ENCODE measurements at regions of chr12 and their contacts with region 1.

Region 1: DNA sequence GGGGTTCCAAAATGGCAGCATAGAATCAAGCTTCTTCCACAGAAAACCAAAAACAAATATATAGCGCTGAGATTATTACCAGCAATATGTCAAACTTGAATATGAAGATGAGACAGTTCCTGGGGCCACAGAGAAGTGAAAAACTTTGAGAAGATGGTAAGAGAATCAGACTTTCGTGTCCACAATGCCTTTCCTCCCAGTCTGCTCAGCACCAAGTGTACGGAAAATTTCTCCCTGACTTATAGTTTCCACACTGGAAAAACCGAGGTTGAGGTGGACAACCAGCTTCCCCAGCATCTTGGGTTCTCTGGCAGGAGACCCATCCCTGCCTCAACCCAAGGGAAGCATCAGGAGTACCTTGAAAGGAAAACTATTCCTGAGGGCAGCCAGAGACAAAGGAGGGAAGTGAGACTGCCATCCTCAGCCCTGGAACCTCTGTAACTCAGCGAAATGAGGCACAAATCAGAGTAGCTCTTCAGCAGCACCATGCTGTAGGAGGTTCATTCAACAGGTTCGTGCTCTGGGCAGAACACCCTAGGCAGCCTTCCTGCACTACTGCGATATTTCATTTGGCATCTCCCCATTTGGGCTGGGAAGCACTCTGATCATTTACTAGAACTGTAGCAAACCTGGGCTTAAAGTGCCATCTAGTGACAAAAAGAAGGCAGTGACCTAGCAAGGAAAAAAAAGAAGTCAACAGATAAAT is 52.4 kb upstream of the CAPRIN2 start:
- DNase-seq: peak; percentile 75
- H3K4me3 Mint-ChIP-seq: no peak overlapping the region
- H3K27ac Mint-ChIP-seq: no peak overlapping the region
- H3K4me1 Mint-ChIP-seq: peaks cover 7% of the 10 kb centered on the region
- H3K27me3 Mint-ChIP-seq: no peaks in the 10 kb centered on the region
- CTCF ChIP-seq: peak; percentile 67

Region 2: GRCh38 chr12:29519585-29520182 is 1287.5 kb before region 1 on chr12:
- CTCF ChIA-PET with region 1: interaction called, 6 read pairs
- POLR2A ChIA-PET with region 1: no interaction called
- intact Hi-C with region 1: loop called (anchors 10 kb)
- DNase-seq: peak; percentile 56
- H3K4me3 Mint-ChIP-seq: no peak overlapping the region
- H3K27ac Mint-ChIP-seq: no peak overlapping the region
- H3K4me1 Mint-ChIP-seq: peaks cover 9% of the 10 kb centered on the region
- H3K27me3 Mint-ChIP-seq: no peaks in the 10 kb centered on the region
- CTCF ChIP-seq: peak; percentile 56

Region 3: GRCh38 chr12:29980304-29980703 is 826.8 kb before region 1 on chr12:
- CTCF ChIA-PET with region 1: no interaction called
- POLR2A ChIA-PET with region 1: no interaction called
- intact Hi-C with region 1: no loop called
- DNase-seq: no peak
- H3K4me3 Mint-ChIP-seq: no peak overlapping the region
- H3K27ac Mint-ChIP-seq: no peak overlapping the region
- H3K4me1 Mint-ChIP-seq: no peaks in the 10 kb centered on the region
- H3K27me3 Mint-ChIP-seq: no peaks in the 10 kb centered on the region
- CTCF ChIP-seq: no peak

Region 4: GRCh38 chr12:30323008-30323407 is 484.1 kb before region 1 on chr12:
- CTCF ChIA-PET with region 1: interaction called, 3 read pairs
- POLR2A ChIA-PET with region 1: no interaction called
- intact Hi-C with region 1: loop called (anchors 2 kb)
- DNase-seq: peak; percentile 8
- H3K4me3 Mint-ChIP-seq: no peak overlapping the region
- H3K27ac Mint-ChIP-seq: no peak overlapping the region
- H3K4me1 Mint-ChIP-seq: no peaks in the 10 kb centered on the region
- H3K27me3 Mint-ChIP-seq: no peaks in the 10 kb centered on the region
- CTCF ChIP-seq: no peak

Region 5: DNA sequence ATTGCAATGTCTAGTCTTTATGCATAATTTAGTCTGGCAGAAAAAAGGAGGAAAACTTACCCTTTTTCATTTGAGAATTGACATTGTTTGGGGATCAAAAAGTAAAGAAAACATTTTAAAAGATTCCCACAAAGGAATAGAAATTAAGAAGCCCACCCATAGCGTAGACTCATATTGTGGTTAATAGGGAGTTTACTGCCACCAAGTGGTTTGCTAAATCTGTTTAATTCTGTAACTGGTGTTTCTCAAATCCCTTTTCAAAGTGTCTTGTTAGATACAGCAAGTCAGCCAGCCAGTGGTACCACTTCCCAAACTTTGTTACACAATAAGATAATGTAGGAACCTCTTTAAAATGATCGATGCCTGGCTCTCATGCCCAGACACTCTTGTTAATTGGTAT is 291.8 kb before region 1 on chr12:
- CTCF ChIA-PET with region 1: interaction called, 3 read pairs
- POLR2A ChIA-PET with region 1: no interaction called
- intact Hi-C with region 1: loop called (anchors 1 kb)
- DNase-seq: peak; percentile 3
- H3K4me3 Mint-ChIP-seq: no peak overlapping the region
- H3K27ac Mint-ChIP-seq: no peak overlapping the region
- H3K4me1 Mint-ChIP-seq: no peaks in the 10 kb centered on the region
- H3K27me3 Mint-ChIP-seq: no peaks in the 10 kb centered on the region
- CTCF ChIP-seq: peak; percentile 32

Region 6: DNA sequence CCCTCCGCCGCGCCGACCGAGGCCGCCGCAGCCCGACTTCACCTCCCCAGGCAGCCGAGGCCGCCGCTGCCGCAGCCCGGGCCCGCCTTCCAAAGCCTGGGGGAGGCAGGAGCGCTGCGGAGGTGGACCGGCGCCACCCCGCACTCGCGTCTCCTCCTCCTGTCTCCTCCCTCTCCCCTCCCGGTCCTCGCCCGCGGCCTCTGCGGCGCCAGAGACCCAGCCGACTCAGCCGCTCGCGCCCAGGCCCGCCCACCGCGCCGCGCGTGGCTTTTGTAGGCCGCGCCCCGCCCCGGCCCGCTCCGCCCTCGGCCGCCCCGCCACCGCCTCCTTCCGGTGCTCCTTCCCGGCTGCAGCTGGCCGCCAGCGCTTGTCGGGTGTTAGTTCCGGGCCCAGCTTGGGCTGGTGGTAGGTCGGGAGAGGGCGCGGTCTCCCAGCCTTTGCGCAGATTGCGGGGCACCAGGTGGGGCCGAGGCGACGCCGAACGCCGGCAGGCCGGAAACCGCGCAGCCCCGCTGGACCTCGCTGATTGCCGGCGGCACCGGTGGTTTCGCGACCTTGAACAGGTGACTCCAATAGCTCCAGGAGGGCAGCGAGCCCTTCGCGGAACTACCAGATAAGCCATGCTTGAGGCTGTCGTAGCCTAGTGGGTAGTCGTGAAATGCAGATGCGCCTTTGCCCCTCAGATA is 52.3 kb before region 1 on chr12 and contains the start of gene CAPRIN2:
- CTCF ChIA-PET with region 1: interaction called, 14 read pairs
- POLR2A ChIA-PET with region 1: interaction called, 4 read pairs
- intact Hi-C with region 1: loop called (anchors 1 kb)
- DNase-seq: peak; percentile 93
- H3K4me3 Mint-ChIP-seq: peak within 1 kb of the TSS; percentile 95
- H3K27ac Mint-ChIP-seq: peak within 1 kb of the TSS; percentile 79
- H3K4me1 Mint-ChIP-seq: peaks cover 33% of the 10 kb centered on the region
- H3K27me3 Mint-ChIP-seq: no peaks in the 10 kb centered on the region
- CTCF ChIP-seq: peak; percentile 21
- total RNA-seq, gene CAPRIN2: 33.0 and 33.3 TPM in 2 replicates